Posterior vena cava (tissue), 2 donors: ENCODE measurements at regions of chr2 and their contacts with region 1.

Region 1: GRCh38 chr2:197460633-197461032 is 7.3 kb downstream of the COQ10B start:
- DNase-seq: no peak

Region 2: DNA sequence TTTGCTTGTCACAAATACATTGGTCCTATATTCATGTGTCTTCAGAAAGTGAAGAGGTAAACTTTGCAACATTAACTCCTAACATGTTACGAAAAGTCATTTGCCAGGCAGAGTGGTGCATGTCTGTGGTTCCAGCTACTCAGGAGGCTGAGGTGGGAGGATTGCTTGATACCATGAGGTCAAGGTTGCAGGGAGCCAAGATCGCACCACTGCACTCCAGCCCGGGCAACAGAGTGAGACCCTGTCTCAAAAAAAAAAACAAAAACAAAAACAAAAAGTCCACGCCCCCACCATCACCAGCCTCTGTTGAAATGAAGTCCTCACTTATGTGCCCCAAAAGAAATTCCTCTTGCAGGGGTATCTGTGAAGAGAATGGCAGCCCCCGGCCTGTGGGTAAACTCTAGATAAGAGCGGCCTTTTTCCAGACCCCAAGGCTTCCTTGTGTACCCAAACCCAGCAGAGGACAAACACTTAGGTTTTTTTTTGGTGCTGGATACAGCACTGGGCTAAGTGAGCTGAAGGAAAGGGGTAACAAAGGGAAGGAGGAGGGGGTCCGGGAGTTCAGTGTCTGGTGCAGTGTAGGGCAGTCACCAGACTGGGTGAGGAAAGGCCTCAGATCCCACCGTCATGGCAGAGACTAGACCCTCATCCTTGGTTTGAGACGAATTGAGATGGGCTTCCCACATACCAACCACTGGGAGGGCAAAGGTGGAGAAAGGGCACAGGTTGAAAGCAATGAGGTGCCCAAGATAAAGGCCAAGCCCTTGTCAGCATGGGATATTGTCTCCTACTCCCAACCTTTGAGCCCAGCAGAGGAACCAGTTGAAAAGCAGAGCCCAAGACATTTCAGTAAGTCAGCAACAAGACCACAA is 19.8 kb after region 1 on chr2:
- intact Hi-C with region 1: loop called in 1 of 2 experiments (anchors 1 kb)
- DNase-seq: no peak

Region 3: GRCh38 chr2:197828464-197829135 is 368.0 kb after region 1 on chr2:
- intact Hi-C with region 1: no loop called
- DNase-seq: no peak